Heart right ventricle (tissue), 16 donors: ENCODE measurements at regions of chr2 and their contacts with region 1.

Region 1: DNA sequence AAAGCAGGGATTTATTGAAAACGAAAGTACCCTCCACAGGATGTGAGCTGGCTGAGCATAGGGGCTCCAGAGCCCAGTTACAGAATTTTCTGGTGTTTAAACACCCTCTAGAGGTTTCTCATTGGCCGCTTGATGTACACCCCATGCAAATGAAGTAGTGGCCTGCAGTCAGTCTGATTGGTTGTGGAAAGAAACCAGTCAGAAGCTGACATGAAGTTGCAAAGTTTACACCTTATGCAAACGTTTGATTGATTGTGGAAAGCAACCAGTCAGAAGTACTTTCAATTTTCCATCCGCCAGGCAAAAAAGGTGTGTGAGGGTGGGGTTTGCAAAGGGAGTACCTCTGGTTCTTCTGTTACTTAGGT is 62.3 kb downstream of the VWA3B start:
- DNase-seq: peak in 1 of 2 donors; percentile 39
- ATAC-seq: peak; percentile 46 to 84 (median 74)
- H3K4me3 ChIP-seq: peak overlapping the region in 6 of 10 donors; percentile 15 to 39 (median 30)
- H3K27ac ChIP-seq: peak overlapping the region in 6 of 10 donors; percentile 19 to 71 (median 30)
- H3K4me1 ChIP-seq: peaks cover 0 to 22% (median 10%) of the 10 kb centered on the region in 9 donors
- H3K27me3 ChIP-seq: no peaks in the 10 kb centered on the region
- CTCF ChIP-seq: peak in 3 of 9 donors; percentile 17 to 25 (median 21)

Region 2: GRCh38 chr2:98188351-98189049 is 39.2 kb after region 1 on chr2:
- intact Hi-C with region 1: loop called in 1 of 10 experiments (anchors 1 kb)
- DNase-seq: no peak
- ATAC-seq: peak in 2 of 8 donors; percentile 56 to 59
- H3K4me3 ChIP-seq: no peak overlapping the region
- H3K27ac ChIP-seq: no peak overlapping the region
- H3K4me1 ChIP-seq: peaks cover 0 to 15% (median 0%) of the 10 kb centered on the region in 9 donors
- H3K27me3 ChIP-seq: no peaks in the 10 kb centered on the region
- CTCF ChIP-seq: peak in 2 of 9 donors; percentile 16 to 31

Region 3: DNA sequence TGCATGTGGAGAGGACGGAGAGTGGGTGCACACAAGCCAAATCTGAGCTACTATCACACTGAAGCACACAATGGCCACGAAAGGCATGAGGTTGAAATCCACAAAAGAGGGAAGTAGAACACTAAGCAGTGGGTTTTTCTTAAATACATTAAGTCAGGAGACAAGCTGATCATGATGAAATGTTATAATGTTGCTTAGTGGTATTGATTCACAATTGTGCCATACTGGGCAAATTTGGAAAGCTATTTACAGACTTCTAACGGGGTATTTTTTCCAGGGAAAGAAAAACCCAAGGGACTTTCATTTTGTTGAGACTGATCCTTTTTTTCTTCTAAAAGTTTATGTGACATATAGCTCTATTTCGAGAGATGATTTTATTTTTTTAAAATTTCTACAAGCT is 96.2 kb after region 1 on chr2:
- intact Hi-C with region 1: no loop called
- DNase-seq: no peak
- ATAC-seq: no peak
- H3K4me3 ChIP-seq: no peak overlapping the region
- H3K27ac ChIP-seq: no peak overlapping the region
- H3K4me1 ChIP-seq: no peaks in the 10 kb centered on the region
- H3K27me3 ChIP-seq: no peaks in the 10 kb centered on the region
- CTCF ChIP-seq: no peak